Activated CD4-positive, alpha-beta memory T cell treated with anti-CD3 and anti-CD28 coated beads for 36 hours (primary cell): ENCODE measurements at regions of chr19 and their contacts with region 1.

Region 1: GRCh38 chr19:33235269-33235995 is 9.8 kb upstream of the SLC7A10 start:
- DNase-seq: peak; percentile 87
- H3K4me3 Mint-ChIP-seq: peak overlapping the region; percentile 50
- H3K27ac Mint-ChIP-seq: no peak overlapping the region
- H3K4me1 Mint-ChIP-seq: peaks cover 7% of the 10 kb centered on the region
- H3K27me3 Mint-ChIP-seq: peaks cover 12% of the 10 kb centered on the region

Region 2: GRCh38 chr19:33208904-33209849 is 26.3 kb before region 1 on chr19:
- CTCF ChIA-PET with region 1: no interaction called
- POLR2A ChIA-PET with region 1: no interaction called
- intact Hi-C with region 1: no loop called
- DNase-seq: no peak
- H3K4me3 Mint-ChIP-seq: no peak overlapping the region
- H3K27ac Mint-ChIP-seq: no peak overlapping the region
- H3K4me1 Mint-ChIP-seq: no peaks in the 10 kb centered on the region
- H3K27me3 Mint-ChIP-seq: no peaks in the 10 kb centered on the region

Region 3: DNA sequence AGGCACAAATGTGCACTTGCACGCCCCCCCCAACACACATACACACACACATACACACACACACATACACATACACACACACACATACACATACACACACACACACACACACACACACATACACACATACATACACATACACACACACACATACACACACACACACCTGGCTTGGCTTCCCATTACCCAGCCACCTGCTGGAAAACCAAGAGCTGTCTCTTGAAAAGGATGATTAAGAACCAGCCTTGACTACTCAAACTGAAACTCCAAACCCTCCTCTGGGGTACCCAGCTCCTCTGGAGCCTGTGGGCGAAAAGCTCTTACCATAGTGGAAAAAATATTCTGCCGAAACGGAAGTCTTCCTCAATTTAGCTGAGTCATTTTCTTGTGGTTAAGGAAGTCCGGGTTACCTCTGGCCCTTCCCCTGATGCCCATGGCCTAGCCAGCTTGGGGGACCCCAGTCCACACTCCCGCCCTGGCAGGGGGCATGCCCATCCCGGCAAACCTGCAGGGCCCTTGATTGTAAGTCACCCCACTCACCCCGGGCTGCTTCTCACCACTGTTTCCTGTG is 45.0 kb after region 1 on chr19:
- CTCF ChIA-PET with region 1: interaction called, 9 read pairs
- POLR2A ChIA-PET with region 1: interaction called, 5 read pairs
- intact Hi-C with region 1: loop called (anchors 5 kb)
- DNase-seq: peak; percentile 76
- H3K4me3 Mint-ChIP-seq: peak overlapping the region; percentile 42
- H3K27ac Mint-ChIP-seq: peak overlapping the region; percentile 68
- H3K4me1 Mint-ChIP-seq: peaks cover 12% of the 10 kb centered on the region
- H3K27me3 Mint-ChIP-seq: peaks cover 3% of the 10 kb centered on the region

Region 4: DNA sequence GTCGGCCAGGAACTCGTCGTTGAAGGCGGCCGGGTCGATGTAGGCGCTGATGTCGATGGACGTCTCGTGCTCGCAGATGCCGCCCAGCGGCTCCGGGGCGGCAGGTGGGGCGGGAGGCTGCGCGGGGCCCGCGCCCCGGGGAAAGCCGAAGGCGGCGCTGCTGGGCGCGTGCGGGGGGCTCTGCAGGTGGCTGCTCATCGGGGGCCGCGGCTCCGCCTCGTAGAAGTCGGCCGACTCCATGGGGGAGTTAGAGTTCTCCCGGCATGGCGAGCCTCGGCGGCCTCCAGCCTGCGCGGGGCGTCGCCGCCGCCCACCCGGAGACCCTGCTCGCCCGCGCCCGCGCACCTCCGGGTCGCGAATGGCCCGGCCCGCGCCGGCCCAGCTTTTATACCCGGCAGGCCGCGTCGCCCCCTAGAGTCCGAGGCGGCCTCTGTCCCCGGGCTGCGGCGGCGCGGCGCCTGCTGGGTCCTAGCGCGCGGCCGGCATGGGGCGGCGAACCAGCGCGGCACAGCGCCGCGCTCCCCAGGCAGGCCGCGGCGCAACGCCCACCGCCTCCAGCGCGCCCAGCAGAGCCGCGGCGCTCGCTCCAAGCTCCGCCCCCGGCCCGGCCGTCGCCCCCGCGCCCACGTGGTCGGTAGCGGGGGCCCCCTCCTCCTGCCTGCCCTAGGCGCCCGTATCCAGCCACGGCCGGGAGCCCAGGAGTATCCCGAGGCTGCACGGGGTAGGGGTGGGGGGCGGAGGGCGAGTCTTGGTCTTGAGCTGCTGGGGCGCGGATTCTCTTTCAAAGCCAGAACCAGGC is 66.9 kb after region 1 on chr19 and contains the start of gene CEBPA:
- CTCF ChIA-PET with region 1: interaction called, 40 read pairs
- POLR2A ChIA-PET with region 1: interaction called, 3 read pairs
- intact Hi-C with region 1: loop called (anchors 2 kb)
- DNase-seq: peak; percentile 68
- H3K4me3 Mint-ChIP-seq: peak within 1 kb of the TSS; percentile 54
- H3K27ac Mint-ChIP-seq: no peak within 1 kb of the TSS
- H3K4me1 Mint-ChIP-seq: no peaks in the 10 kb centered on the region
- H3K27me3 Mint-ChIP-seq: peaks cover 29% of the 10 kb centered on the region
- total RNA-seq, gene CEBPA: 0.22 to 0.33 TPM

Region 5: DNA sequence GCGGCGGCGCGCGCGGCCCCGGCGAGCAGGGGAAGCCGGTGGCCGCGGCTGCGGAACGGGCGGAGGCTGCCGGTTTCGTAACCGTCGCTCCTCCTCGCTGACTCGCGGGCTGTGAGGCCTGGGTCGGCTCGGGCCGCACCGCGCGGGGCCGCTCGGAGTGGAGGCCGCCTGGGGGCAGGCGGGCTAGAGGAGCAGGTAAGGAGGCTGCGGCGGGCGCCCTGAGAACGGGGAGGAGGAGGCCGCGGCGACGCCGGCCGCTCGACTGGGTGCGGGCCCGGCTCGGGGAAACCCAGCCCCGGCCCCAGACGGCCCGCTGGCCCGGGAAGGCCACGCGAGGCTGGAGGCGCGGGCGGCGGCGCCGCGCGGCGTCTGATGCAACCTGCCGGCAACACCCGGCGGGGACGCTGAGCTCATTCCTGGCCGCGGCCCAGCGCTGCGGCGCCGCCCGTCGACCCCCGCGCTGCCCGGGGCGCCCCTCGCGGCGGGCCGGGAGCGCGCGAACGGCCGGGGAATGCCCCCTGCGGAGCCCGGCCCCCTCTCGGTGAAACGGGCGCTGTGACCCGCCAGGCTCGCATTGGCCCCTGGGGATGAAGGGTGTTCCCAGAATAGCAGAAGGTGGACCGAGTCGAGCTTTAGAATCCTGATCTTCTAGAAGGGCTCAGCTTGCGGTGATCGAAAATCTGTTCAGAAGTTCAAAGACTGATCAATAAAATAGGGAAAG is 138.4 kb after region 1 on chr19 and contains the start of gene CEBPG:
- CTCF ChIA-PET with region 1: interaction called, 11 read pairs
- POLR2A ChIA-PET with region 1: interaction called, 9 read pairs
- intact Hi-C with region 1: loop called (anchors 10 kb)
- DNase-seq: peak; percentile 66
- H3K4me3 Mint-ChIP-seq: peak within 1 kb of the TSS; percentile 87
- H3K27ac Mint-ChIP-seq: peak within 1 kb of the TSS; percentile 81
- H3K4me1 Mint-ChIP-seq: peaks cover 45% of the 10 kb centered on the region
- H3K27me3 Mint-ChIP-seq: no peaks in the 10 kb centered on the region
- total RNA-seq, gene CEBPG: 30.6 to 30.9 TPM

Region 6: DNA sequence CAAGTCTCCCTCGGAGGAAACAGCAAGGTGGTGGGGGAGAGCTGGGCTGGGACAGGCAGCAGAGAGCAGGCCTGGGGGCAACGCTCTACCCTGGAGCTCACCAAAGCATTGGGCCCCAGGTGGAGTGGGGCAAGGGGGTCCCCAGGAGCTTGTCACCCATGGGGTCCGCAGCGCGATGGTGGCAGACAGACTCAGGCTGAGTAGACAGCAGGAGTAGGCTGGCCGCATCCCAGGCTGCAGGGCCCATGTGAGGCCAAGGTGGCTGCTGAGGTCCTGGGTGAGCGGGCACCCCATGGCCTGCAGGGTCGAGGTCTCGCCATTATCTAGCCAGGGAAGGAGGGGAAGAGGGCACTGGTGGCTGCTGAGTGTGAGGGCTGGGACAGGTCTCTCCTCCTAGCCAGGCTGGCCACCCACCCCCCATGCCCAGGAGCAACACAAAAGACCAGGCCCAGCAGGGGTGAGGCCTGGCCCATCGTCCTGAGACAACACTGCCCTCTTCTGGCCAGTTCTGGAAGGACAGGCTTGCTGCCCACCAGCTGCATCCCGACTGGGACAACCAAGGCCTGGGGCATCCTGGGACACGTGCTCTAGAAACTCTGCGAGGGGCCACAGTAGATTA is 171.2 kb after region 1 on chr19:
- CTCF ChIA-PET with region 1: interaction called, 56 read pairs
- POLR2A ChIA-PET with region 1: no interaction called
- intact Hi-C with region 1: loop called (anchors 1 kb)
- DNase-seq: peak; percentile 84
- H3K4me3 Mint-ChIP-seq: no peak overlapping the region
- H3K27ac Mint-ChIP-seq: no peak overlapping the region
- H3K4me1 Mint-ChIP-seq: peaks cover 4% of the 10 kb centered on the region
- H3K27me3 Mint-ChIP-seq: no peaks in the 10 kb centered on the region

Region 7: DNA sequence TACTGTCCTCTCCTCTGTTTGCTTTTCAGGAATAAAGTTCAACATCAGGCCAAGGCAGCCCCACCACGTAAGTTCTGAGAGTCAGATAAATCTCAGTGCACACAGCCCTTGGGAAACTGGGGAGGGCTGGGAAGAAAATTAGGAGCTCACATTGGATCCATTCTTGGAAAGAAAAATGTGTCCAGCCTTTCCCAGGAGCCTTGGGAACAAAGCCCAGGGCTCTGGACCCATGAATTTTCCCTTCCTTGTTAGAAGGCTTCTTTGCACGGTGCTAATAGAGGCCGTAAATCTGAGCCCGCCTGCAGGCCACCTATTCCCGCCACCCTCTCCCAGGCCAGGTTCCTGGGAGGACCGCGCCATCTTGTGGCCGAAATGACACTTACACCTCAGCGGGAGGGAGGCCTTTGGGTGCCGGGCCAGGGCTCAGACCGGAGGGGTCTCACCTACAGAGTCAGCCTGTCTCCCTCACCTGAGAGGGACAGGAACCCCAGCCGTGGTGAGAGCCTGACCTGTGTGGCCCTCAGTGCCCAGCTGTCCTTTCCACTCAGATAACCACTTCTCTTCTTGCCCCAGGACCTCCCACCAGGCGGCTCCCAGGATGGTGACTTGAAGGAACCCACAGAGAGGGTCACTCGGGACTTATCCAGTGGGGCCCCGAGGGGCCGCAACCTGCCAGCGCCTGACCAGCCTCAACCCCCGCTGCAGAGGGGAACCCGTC is 536.1 kb after region 1 on chr19:
- CTCF ChIA-PET with region 1: no interaction called
- POLR2A ChIA-PET with region 1: no interaction called
- intact Hi-C with region 1: loop called (anchors 5 kb)
- DNase-seq: peak; percentile 78
- H3K4me3 Mint-ChIP-seq: no peak overlapping the region
- H3K27ac Mint-ChIP-seq: no peak overlapping the region
- H3K4me1 Mint-ChIP-seq: no peaks in the 10 kb centered on the region
- H3K27me3 Mint-ChIP-seq: peaks cover 16% of the 10 kb centered on the region